Activated B cell treated with CpG ODN at 0.5 μM for 24 hours (primary cell): ENCODE measurements at regions of chr11 and their contacts with region 1.

Region 1: DNA sequence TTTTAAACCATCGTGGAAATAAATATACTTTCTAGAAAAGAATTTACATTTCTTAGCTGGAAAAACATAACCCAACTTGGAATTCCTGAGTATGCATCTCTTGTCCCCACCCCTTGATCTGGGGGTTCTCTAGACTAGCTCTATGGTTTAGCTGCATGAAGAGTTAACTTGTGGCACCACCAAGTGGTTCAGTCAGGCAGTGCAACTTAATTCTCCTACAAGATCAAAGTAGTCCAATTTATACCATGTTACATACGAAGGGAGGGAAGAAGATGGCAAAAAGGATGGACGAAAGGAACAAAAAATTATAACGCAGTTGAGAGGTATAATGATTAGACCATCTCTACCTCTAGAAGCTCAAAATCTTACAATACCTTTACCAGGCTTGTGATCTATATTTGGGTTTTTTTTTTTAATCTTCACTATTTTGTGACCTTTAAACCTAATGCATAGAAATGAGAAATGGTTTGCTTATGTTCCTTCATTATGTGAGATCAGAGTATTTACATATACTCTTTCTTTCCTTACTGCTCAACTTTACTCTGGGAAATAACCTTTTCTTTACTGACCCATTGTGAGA is 28.5 kb upstream of the ALKBH3 start:
- DNase-seq: no peak
- ATAC-seq: peak; percentile 64
- H3K4me3 Mint-ChIP-seq: no peak overlapping the region
- H3K27ac Mint-ChIP-seq: no peak overlapping the region
- H3K4me1 Mint-ChIP-seq: no peaks in the 10 kb centered on the region
- H3K27me3 Mint-ChIP-seq: no peaks in the 10 kb centered on the region
- CTCF ChIP-seq: no peak

Region 2: DNA sequence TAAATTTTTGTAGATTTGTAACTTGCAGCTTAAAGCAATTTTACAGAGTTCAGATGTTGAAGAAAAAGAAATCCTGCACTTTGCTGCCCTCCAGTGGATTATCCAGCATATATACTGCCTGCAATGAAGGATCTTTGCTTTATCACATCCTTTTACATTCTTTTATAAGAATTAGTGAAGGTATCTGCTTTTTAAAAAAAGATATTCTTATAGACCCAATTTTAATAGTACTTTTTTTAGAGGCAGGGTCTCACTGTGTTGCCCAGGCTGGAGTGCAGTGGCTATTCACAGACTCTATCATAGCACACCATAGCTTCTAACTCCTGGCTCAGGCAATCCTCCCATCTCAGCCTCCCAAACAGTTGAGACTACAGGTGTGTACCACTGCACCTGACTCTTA is 432.7 kb before region 1 on chr11:
- CTCF ChIA-PET with region 1: interaction called, 14 read pairs
- POLR2A ChIA-PET with region 1: no interaction called
- intact Hi-C with region 1: loop called (anchors 1 kb)
- DNase-seq: no peak
- ATAC-seq: no peak
- H3K4me3 Mint-ChIP-seq: no peak overlapping the region
- H3K27ac Mint-ChIP-seq: no peak overlapping the region
- H3K4me1 Mint-ChIP-seq: no peaks in the 10 kb centered on the region
- H3K27me3 Mint-ChIP-seq: no peaks in the 10 kb centered on the region
- CTCF ChIP-seq: no peak

Region 3: DNA sequence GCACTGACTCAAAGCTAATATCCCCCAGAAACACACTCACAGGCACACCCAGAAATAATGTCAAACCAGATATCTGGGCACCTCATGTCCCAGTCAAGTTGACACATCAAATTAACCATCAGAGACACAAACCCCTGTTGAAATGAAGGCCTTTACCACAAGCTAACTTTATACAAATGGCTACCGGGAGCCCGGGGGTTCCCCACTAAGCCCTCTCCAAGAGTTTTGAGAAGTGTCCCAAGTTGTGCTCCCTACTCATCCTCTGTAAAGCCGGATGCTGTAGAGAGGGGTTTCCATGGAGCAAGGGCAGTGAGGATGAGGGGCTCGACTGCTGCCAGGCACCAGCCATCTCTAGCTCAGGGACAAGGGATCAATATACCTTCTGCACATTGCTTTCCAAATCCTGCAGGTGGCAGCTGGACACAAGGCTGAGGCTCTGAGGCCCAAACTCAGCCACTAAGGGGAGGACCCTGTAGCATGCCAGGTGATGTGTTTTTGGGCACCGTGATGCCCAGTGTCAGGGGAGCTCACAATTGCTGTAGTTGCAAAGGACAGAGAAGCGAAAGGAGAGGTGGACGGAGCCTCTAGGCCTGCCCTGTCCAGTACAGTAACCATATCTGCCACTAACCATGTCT is 347.7 kb before region 1 on chr11:
- CTCF ChIA-PET with region 1: interaction called, 12 read pairs
- POLR2A ChIA-PET with region 1: no interaction called
- intact Hi-C with region 1: loop called (anchors 1 kb)
- DNase-seq: no peak
- ATAC-seq: no peak
- H3K4me3 Mint-ChIP-seq: no peak overlapping the region
- H3K27ac Mint-ChIP-seq: no peak overlapping the region
- H3K4me1 Mint-ChIP-seq: no peaks in the 10 kb centered on the region
- H3K27me3 Mint-ChIP-seq: peaks cover 11% of the 10 kb centered on the region
- CTCF ChIP-seq: no peak

Region 4: DNA sequence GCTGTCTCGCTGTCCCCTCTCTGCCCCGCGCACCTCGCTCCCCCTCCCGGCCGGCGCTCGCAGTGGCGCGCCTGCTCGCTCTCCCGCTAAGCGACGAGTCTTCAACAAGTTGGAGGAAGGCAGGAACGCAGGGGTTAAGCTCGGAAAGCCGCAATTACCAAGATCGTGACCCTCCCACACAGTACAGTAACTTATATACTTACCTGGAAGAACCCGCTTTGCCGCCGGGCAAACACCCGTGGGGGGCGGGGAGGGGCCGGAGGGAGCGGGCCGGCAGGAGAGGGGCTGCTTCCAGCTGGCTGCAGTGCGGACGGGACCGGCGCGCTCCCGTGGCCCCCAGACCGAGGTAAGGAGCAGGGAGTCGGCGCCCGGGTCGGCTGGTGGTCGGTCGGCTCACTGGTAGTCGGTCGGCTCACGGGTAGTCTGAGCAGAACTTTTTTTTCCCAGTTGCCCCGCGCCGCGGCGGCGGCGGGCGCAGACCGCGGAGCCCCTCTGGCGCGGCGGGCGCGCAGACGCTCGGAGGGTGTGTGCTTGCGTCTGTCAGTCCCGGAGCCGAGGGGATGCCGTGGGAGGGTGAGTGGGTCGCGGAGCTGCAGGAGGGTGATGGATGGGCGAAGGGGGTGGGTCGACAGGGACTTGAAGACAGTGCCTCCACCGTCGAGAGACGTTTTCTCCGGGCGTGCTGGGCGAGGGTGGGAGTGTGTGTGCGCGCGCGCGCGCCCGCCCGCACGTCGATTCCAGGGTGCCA is 272.8 kb before region 1 on chr11:
- CTCF ChIA-PET with region 1: interaction called, 3 read pairs
- POLR2A ChIA-PET with region 1: no interaction called
- intact Hi-C with region 1: loop called (anchors 2 kb)
- DNase-seq: no peak
- ATAC-seq: peak; percentile 41
- H3K4me3 Mint-ChIP-seq: peak overlapping the region; percentile 81
- H3K27ac Mint-ChIP-seq: no peak overlapping the region
- H3K4me1 Mint-ChIP-seq: peaks cover 45% of the 10 kb centered on the region
- H3K27me3 Mint-ChIP-seq: peaks cover 76% of the 10 kb centered on the region
- CTCF ChIP-seq: no peak

Region 5: DNA sequence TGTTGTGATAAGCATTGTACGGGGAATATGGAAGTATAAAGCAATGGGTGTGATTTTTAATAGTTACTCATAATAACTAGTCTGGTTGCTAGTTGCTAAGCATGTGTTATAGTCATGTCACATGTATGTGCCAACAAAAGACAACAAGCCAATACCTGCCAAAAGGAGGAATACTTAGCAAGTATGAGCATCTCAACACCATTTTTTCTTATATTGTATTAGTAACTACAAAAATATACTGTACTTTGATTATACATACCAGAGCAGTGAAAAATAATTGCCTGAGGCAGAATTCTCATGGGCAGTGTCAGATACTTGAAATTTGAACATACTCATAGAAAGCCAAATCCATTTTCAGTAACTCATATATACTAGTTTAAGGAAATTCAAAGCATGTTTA is 33.9 kb before region 1 on chr11:
- CTCF ChIA-PET with region 1: no interaction called
- POLR2A ChIA-PET with region 1: no interaction called
- intact Hi-C with region 1: no loop called
- DNase-seq: no peak
- ATAC-seq: no peak
- H3K4me3 Mint-ChIP-seq: no peak overlapping the region
- H3K27ac Mint-ChIP-seq: no peak overlapping the region
- H3K4me1 Mint-ChIP-seq: no peaks in the 10 kb centered on the region
- H3K27me3 Mint-ChIP-seq: no peaks in the 10 kb centered on the region
- CTCF ChIP-seq: no peak